ENCODE measurements at regions of chr9 and their contacts with region 1.

Region 1: DNA sequence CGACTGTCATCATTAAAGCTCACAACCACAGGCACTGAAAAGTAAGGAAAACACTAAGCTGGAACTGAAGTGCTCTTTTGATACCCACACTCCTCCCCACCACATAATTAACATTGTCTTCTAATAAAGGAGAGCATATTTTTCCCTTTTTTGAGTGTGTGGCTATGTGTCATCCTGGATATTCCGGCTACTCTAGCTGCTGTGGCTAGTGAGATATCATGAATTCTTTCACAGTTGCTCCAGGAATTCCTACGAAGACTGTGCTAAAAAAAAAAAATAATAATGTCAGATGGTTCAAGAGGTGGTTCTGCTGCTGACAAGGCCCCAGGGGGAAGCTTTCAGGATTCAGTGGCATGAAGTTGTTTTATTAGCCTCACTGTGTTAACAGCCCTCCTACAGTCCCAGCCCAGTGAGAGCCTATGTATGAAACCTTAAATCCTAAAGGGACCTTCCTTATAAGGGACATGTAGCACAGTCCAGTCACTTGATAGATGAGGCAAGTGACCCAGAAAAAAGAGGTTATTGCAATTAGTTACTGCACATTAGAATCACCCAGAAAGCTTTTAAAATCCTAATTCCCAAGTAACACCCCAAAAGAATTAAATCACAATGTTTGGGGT is 46.6 kb downstream of the TMEM252 start:
- DNase-seq: no peak
- ATAC-seq: no peak

Region 2: GRCh38 chr9:68454579-68455334 is 39.3 kb before region 1 on chr9:
- intact Hi-C with region 1: loop called (anchors 5 kb)
- DNase-seq: no peak
- ATAC-seq: no peak

Region 3: GRCh38 chr9:68507130-68507805 is 13.2 kb after region 1 on chr9:
- intact Hi-C with region 1: no loop called
- DNase-seq: no peak
- ATAC-seq: peak; percentile 57

Region 4: GRCh38 chr9:68522131-68522530 is 28.1 kb after region 1 on chr9:
- intact Hi-C with region 1: no loop called
- DNase-seq: no peak
- ATAC-seq: peak; percentile 44

Measured in Right ventricle myocardium inferior (tissue), 1 donor.